Left ventricle myocardium superior (tissue), 1 donor: ENCODE measurements at regions of chr2 and their contacts with region 1.

Region 1: DNA sequence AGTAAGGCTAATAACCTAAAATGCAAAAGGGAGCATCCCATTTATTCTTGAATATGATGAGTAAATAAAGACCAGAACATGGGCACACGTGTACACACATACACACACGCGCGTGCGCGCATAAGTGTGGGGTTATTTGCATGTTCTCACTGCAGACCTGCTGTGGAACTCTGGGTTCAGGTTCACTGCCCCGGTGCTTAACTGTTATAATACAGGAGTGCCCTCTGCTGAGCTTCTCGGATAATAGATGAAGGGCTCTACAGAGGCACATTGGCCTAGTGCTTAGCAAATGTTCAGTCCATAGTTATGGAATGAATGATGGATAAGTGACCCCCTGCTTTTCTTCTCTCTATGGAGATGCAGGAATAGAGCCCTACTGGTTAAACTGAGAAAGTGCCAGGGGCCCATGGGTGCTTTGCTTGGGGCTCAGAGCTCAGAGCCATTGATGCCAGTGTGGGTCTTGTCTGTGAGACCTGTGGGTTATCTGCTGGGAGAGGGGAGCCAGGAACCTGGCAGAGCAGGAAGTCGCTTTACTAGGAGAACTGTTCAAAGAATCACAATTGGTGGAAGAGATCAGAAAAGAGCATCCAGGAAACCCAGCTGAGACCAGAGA is 3.6 kb upstream of the ARL4C start:
- DNase-seq: peak; percentile 55
- ATAC-seq: peak; percentile 48

Region 2: DNA sequence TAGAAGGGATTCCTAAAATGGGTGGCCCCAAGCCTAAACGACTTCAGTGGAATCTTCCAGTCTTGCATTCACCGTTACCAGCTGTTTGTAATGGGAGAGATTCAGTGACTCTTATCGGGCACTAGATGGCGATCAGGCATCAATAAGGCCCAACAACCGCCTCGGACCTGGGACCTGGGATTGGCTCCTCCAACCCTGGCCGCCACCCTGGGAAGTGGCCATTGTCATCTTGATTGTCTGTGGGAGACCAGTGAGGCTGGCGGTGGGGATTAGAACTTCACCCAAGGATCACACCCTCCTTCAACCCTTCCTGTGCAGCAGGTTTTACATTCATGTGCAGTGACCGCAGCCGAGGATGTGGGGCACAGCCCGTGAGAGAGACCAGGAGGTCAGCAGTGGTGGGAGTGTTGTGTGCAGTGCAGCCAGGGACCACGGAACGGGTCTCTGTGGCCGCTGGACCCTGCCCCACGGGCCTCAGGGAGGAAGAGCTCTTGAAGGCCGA is 364.7 kb before region 1 on chr2:
- intact Hi-C with region 1: loop called (anchors 5 kb)
- DNase-seq: peak; percentile 45
- ATAC-seq: peak; percentile 71

Region 3: DNA sequence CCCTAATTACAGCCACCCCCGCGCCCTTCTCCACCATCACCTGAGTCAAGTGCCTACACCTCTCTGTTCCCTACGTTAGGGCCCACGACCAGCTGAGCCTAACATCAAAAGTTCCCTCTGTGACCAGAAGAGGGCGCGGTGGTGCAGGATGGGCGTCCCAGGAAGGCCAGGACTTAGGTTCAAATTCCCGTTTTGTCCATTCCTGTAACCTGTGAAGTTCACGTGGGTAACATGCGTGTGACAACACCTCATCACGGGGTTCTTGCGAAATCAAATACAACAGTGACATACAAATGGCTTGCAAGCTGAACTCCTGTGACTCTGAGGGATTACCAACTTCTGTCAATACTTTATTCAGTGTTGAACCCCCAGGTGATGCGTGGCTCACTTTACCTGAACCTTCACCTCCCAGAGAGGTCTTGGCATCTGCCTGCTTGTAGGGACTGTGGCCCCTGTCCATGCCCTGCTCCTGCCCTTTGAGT is 211.5 kb before region 1 on chr2:
- intact Hi-C with region 1: loop called (anchors 5 kb)
- DNase-seq: peak; percentile 65
- ATAC-seq: peak; percentile 39